ENCODE measurements at regions of chr6 and their contacts with region 1.

Region 1: DNA sequence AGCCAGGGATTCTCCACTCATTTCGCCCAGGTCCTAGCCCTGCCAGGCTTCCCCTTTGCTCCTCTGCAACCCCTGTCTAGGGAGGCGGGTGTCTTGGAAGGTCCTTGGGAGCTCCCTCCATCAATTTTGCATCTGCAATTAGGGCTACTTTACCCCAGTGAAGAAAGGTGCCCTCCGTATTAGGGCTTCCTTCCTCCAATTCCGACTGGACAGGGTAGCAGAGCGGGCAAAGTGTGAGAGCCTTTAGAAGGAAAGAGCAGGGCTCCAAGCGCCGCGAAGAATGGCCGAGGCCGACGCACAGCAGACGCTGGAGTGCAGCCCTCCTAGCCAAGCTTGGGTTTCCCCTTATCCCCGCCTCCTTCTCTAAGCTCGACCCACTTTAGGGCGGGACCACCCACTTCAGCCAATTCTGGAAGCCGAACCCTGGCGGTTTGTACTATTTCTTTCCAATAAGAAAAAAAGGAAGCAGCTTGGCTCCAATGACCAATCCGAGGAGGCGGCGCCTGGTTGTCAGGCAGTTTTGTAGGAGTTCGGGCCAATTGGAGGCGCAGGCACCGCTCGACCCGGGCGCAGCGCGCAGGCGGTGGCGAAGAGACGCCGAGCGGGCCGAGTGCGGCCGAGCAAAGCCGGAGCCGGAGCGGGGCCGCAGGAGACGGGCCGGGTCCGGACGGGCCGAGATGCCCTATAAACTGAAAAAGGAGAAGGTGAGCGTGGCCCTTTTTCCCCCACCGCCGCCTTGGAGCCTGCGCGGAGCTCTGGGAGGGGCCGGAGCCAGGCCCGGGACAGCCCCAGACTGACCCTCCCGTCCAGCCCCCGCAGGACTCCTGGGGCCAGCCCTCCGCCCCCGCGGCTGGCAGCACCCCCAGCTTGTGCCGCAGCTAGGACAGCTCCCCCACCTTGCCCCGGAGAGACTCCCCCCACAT is at the start of gene PPP2R5D:
- DNase-seq: peak; percentile 97
- ATAC-seq: peak; percentile 93
- H3K4me3 ChIP-seq: peak within 1 kb of the TSS; percentile 82 to 85
- H3K27ac ChIP-seq: peak within 1 kb of the TSS; percentile 73
- H3K4me1 ChIP-seq: peaks cover 6 to 27% of the 10 kb centered on the region in 2 experiments; a peak in 3 of 4 replicates
- H3K27me3 ChIP-seq: no peaks in the 10 kb centered on the region
- CTCF ChIP-seq: no peak
- POLR2A ChIP-seq: peak; percentile 85
- RAD21 ChIP-seq: no peak
- total RNA-seq, gene PPP2R5D: 49.6 TPM

Region 2: DNA sequence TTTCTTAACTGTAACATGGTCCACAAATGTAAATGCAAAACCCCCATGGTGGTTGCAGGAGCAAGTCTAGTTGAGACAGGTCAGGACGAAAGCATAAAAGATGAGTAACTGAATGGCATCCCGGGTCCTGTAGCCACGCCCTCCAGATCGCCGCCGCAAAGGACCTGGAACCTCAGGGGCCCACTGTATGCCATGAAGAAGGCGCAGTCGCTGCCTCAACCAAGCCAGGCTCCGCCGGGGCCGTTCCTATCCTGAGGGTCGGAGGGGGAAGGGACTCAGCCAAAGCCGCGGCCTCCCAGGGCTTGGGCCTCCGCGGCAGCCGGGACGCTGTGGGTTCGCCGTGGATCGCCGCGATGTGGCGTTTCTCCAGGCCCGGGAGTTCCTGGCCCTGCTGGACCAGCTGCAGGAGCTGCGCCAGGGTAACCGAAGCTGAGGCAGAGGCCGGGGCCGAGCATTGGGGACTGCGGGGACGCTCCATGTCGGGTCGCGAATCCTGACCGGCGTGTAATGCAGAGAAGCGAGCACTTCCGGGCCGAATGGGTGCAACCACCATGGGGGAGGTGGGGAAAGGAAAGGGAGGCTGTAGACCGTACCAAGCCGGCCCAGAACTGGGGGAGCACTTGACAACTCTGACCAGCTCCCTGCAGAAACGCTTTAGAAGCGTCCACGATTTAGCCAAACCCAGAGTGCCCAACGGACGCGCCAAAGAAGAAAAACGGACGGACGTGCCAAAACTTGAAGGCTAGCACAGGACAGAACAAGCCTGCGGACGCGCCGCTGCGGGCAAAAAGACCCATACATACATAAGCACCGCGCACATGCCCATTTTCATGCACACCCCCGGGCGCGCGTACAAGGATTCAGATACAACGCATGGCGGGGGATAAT is 93.7 kb before region 1 on chr6:
- CTCF ChIA-PET with region 1: no interaction called
- POLR2A ChIA-PET with region 1: no interaction called
- RAD21 ChIA-PET with region 1: no interaction called
- intact Hi-C with region 1: no loop called
- DNase-seq: peak; percentile 89
- ATAC-seq: peak; percentile 90
- H3K4me3 ChIP-seq: peak overlapping the region; percentile 87 to 93
- H3K27ac ChIP-seq: peak overlapping the region; percentile 98
- H3K4me1 ChIP-seq: peaks cover 3 to 18% of the 10 kb centered on the region in 2 experiments; a peak in 3 of 4 replicates
- H3K27me3 ChIP-seq: no peaks in the 10 kb centered on the region
- CTCF ChIP-seq: no peak
- POLR2A ChIP-seq: peak; percentile 60
- RAD21 ChIP-seq: no peak

Region 3: GRCh38 chr6:42928986-42929820 is 55.1 kb before region 1 on chr6 and contains the start of gene CNPY3:
- CTCF ChIA-PET with region 1: no interaction called
- POLR2A ChIA-PET with region 1: interaction called, 11 read pairs
- RAD21 ChIA-PET with region 1: interaction called in 1 of 2 experiments, 3 read pairs
- intact Hi-C with region 1: no loop called
- DNase-seq: peak; percentile 98
- ATAC-seq: peak; percentile 90
- H3K4me3 ChIP-seq: peak within 1 kb of the TSS; percentile 60 to 79
- H3K27ac ChIP-seq: peak within 1 kb of the TSS; percentile 88
- H3K4me1 ChIP-seq: peaks cover 8 to 18% of the 10 kb centered on the region in 2 experiments; a peak in 3 of 4 replicates
- H3K27me3 ChIP-seq: no peaks in the 10 kb centered on the region
- CTCF ChIP-seq: no peak
- POLR2A ChIP-seq: peak; percentile 33
- RAD21 ChIP-seq: no peak
- total RNA-seq, gene CNPY3: 49.1 TPM

Region 4: DNA sequence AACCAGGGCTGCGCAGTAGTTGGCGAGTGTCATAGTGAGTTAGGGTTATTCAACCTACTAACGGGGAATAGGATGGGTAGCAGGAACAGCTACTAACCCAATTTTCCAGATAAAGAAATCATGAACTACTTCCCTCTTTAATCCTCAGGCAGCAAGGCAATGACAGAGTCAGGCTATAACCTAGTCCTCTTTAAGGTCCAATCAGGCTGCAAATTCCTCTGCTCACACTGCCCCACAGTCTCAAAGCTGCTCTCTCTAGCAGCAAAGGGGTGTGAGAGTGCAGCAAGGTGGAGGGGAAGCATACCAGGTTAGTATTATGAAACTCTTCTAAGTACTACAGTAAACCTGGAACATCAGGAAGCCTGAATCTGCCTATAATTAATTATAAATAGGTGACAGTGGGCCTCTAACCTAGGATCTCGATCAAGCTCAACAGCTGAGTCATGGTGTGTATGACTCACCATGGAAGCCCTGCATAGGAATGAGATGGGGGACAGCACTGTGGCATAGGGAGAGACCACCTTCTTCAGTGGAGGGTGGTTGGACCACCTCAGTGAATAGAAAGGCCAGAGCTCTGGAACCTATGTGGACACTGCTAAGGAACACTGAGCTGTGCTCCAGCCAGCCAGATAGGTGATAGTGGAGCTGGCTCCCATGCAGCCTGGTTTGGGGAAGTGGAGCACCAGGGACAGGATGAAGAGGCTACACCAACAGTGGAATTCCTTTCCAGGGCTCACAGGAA is 13.2 kb before region 1 on chr6:
- CTCF ChIA-PET with region 1: interaction called, 4 read pairs
- POLR2A ChIA-PET with region 1: interaction called, 12 read pairs
- RAD21 ChIA-PET with region 1: interaction called in 1 of 2 experiments, 3 read pairs
- intact Hi-C with region 1: no loop called
- DNase-seq: no peak
- ATAC-seq: peak; percentile 76
- H3K4me3 ChIP-seq: peak overlapping the region in 1 of 2 experiments; percentile 17; a peak in 1 of 4 replicates
- H3K27ac ChIP-seq: peak overlapping the region; percentile 38
- H3K4me1 ChIP-seq: peaks cover 15 to 27% of the 10 kb centered on the region in 2 experiments
- H3K27me3 ChIP-seq: no peaks in the 10 kb centered on the region
- CTCF ChIP-seq: no peak
- POLR2A ChIP-seq: no peak
- RAD21 ChIP-seq: no peak

Region 5: DNA sequence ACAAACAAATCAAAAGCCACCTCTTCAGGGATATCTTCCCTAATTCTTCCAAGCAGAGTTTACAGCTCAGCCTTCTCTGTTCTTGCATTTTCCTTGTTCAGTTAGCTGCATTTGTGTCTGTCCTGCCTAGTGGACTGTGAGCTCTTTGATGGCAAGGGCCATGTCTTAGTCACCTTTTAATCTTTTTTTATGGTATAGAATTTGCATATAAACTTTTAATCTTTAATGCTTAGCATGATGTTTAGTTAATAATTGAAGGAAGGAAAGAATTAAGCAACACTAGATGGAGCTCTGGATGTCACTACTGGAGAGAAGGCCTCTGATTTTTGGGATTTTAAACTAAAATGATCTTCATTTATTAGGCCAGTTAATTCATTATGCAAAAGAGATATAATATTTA is 12.3 kb after region 1 on chr6:
- CTCF ChIA-PET with region 1: interaction called, 12 read pairs
- POLR2A ChIA-PET with region 1: interaction called, 4 read pairs
- RAD21 ChIA-PET with region 1: no interaction called
- intact Hi-C with region 1: no loop called
- DNase-seq: no peak
- ATAC-seq: no peak
- H3K4me3 ChIP-seq: no peak overlapping the region
- H3K27ac ChIP-seq: no peak overlapping the region
- H3K4me1 ChIP-seq: no peaks in the 10 kb centered on the region
- H3K27me3 ChIP-seq: no peaks in the 10 kb centered on the region
- CTCF ChIP-seq: no peak; a peak in 1 of 6 replicates
- POLR2A ChIP-seq: no peak
- RAD21 ChIP-seq: peak; percentile 16; the same call in 1 of the 2 replicates

Measured in HCT116 (cell line).